ENCODE measurements at regions of chr1 and their contacts with region 1.

Region 1: GRCh38 chr1:50332941-50333594 is 90.2 kb downstream of the DMRTA2 start:
- DNase-seq: peak in 2 of 3 donors; percentile 58 to 60
- H3K4me3 ChIP-seq: peak overlapping the region in 6 of 7 experiments; percentile 39 to 78 (median 59)
- H3K27ac ChIP-seq: no peak overlapping the region
- H3K4me1 ChIP-seq: peaks cover 0 to 17% (median 15%) of the 10 kb centered on the region in 4 experiments
- H3K27me3 ChIP-seq: peaks cover 0 to 22% (median 6%) of the 10 kb centered on the region in 5 experiments

Region 2: GRCh38 chr1:50279622-50280330 is 53.3 kb before region 1 on chr1:
- CTCF ChIA-PET with region 1: no interaction called
- POLR2A ChIA-PET with region 1: no interaction called
- DNase-seq: peak; percentile 29 to 72 (median 69)
- H3K4me3 ChIP-seq: no peak overlapping the region
- H3K27ac ChIP-seq: no peak overlapping the region
- H3K4me1 ChIP-seq: no peaks in the 10 kb centered on the region
- H3K27me3 ChIP-seq: peaks cover 0 to 20% (median 7%) of the 10 kb centered on the region in 5 experiments

Region 3: GRCh38 chr1:50343323-50343722 is 10.3 kb after region 1 on chr1:
- CTCF ChIA-PET with region 1: interaction called, 34 read pairs
- POLR2A ChIA-PET with region 1: no interaction called
- DNase-seq: no peak
- H3K4me3 ChIP-seq: no peak overlapping the region
- H3K27ac ChIP-seq: no peak overlapping the region
- H3K4me1 ChIP-seq: peaks cover 0 to 13% (median 13%) of the 10 kb centered on the region in 4 experiments
- H3K27me3 ChIP-seq: no peaks in the 10 kb centered on the region

Measured in common myeloid progenitor, CD34-positive (primary cell).